AG04449 (cell line): ENCODE measurements at regions of chr17 and their contacts with region 1.

Region 1: GRCh38 chr17:81484195-81484979 is 28.2 kb downstream of the ACTG1 start:
- DNase-seq: no peak
- H3K4me3 ChIP-seq: peak overlapping the region; percentile 57
- CTCF ChIP-seq: peak; percentile 83

Region 2: DNA sequence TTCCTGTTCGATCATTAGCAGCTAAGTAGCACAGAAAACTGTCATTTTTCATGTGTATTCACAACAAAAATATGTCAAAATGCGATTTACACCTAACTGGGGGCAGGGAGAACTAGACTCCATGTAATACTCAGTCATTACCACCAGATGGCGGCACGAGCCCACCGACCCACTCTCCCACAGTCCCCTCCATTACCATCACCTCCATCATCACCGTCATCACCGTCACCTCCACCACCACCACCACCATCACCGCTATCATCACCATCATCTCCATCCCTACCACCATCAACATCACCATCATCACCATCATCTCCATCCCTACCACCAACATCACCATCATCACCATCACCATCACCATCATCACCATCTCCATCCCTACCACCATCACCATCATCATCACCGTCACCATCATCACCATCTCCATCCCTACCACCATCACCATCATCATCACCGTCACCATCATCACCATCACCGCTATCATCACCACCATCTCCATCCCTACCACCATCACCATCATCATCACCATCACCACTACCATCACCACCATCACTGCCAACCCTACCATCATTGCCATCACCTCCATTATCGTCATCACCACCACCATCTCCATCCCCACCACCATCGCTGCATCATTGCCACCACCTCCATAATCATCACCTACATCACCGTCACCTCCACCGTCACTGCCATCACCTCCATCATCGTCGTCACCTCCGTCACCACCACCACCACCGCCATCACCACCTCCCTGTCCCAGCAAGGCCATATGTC is 230.8 kb before region 1 on chr17:
- CTCF ChIA-PET with region 1: interaction called, 188 read pairs
- POLR2A ChIA-PET with region 1: interaction called, 3 read pairs
- DNase-seq: no peak
- H3K4me3 ChIP-seq: no peak overlapping the region
- CTCF ChIP-seq: peak; percentile 77

Region 3: DNA sequence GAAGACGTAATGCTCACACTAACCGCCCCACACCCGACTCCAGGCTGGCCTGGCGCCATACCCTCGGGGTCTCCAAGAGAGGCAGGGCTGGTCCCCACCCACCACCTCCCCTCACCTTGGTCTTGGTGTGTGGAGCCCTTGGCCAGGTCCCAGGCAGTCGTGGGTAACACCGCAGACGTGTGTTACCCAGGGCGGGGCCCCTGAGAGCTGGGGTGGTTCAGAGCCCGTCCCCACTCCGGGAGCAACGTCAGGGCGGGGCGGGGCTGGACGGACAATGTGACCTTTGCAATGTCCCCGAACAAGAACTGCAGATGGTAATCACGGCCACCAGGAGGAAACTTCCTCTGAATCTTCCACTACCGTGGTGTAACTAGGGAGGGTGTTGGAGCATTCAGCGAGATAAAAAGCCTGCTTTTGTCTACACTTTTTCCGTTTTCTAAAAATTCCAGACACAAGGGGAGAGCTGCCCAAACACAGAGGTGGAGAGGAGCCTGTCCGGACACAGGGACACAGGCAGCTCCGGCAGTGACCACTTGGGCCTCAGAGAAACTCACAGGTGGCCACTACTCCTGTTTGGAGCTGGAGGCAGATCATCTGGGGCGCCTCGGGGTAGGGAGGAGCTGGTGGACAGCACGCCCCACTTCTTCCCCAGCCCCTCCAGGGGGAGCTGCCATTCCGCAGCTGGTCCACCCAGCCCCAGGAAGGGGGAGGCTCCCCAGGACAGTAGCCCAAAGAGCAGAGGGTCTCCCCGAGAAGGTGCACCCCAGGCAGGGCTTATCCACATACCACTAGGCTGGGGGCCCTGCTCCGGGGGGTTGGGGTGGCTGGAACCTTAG is 175.1 kb before region 1 on chr17:
- CTCF ChIA-PET with region 1: interaction called, 16 read pairs
- POLR2A ChIA-PET with region 1: no interaction called
- DNase-seq: no peak
- H3K4me3 ChIP-seq: no peak overlapping the region
- CTCF ChIP-seq: peak; percentile 64

Region 4: GRCh38 chr17:81394921-81395599 is 89.3 kb before region 1 on chr17 and contains the start of gene BAHCC1:
- CTCF ChIA-PET with region 1: interaction called, 51 read pairs
- POLR2A ChIA-PET with region 1: interaction called, 12 read pairs
- DNase-seq: peak; percentile 96
- H3K4me3 ChIP-seq: peak within 1 kb of the TSS; percentile 69
- CTCF ChIP-seq: peak; percentile 10

Region 5: GRCh38 chr17:81471804-81472456 is 12.5 kb before region 1 on chr17:
- CTCF ChIA-PET with region 1: interaction called, 13 read pairs
- POLR2A ChIA-PET with region 1: interaction called, 3 read pairs
- DNase-seq: peak; percentile 59
- H3K4me3 ChIP-seq: peak overlapping the region; percentile 49
- CTCF ChIP-seq: peak; percentile 69